A549 (cell line): ENCODE measurements at regions of chr14 and their contacts with region 1.

Region 1: DNA sequence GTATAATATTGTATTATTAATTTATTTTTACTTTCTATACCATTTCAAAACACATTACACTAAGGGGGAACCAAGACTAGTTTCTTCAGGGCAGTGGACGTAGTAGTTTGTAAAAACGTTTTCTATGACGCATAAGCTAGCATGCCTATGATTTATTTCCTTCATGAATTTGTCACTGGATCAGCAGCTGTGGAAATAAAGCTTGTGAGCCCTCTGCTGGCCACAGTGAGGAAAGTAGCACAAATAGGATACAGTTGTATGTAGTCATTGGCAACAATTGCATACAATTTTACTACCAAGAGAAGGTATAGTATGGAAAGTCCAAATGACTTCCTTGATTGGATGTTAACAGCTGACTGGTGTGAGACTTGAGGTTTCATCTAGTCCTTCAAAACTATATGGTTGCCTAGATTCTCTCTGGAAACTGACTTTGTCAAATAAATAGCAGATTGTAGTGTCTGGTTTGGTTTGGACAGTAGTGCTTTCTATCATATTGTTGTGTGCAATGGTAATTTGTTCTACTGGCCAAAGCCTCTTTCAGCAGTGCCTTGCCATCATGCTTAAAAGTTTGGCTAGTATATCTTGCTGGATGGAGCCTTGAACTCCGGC is 24.3 kb upstream of the PLEKHD1 start:
- DNase-seq: peak; percentile 79 to 85
- ATAC-seq: peak; percentile 98
- H3K4me3 ChIP-seq: no peak overlapping the region
- H3K27ac ChIP-seq: no peak overlapping the region
- H3K4me1 ChIP-seq: no peaks in the 10 kb centered on the region
- CTCF ChIP-seq: peak; percentile 84
- EP300 ChIP-seq: no peak
- POLR2A ChIP-seq: no peak
- RAD21 ChIP-seq: peak; percentile 75 to 80

Region 2: GRCh38 chr14:69247676-69248440 is 212.3 kb before region 1 on chr14:
- CTCF ChIA-PET with region 1: interaction called, 95 read pairs
- POLR2A ChIA-PET with region 1: no interaction called
- DNase-seq: no peak
- ATAC-seq: peak in 1 of 2 experiments; percentile 41; a peak in 1 of 6 replicates
- H3K4me3 ChIP-seq: no peak overlapping the region
- H3K27ac ChIP-seq: no peak overlapping the region
- H3K4me1 ChIP-seq: no peaks in the 10 kb centered on the region; the same call in 2 of the 3 replicates
- CTCF ChIP-seq: no peak; the same call in 2 of the 3 replicates
- EP300 ChIP-seq: no peak
- POLR2A ChIP-seq: no peak
- RAD21 ChIP-seq: no peak

Region 3: GRCh38 chr14:69475194-69475818 is 15.1 kb after region 1 on chr14:
- CTCF ChIA-PET with region 1: interaction called, 12 read pairs
- POLR2A ChIA-PET with region 1: no interaction called
- DNase-seq: peak; percentile 35 to 56
- ATAC-seq: peak; percentile 80 to 87; a peak in 4 of 6 replicates
- H3K4me3 ChIP-seq: no peak overlapping the region
- H3K27ac ChIP-seq: no peak overlapping the region
- H3K4me1 ChIP-seq: no peaks in the 10 kb centered on the region
- CTCF ChIP-seq: peak; percentile 47
- EP300 ChIP-seq: no peak
- POLR2A ChIP-seq: no peak
- RAD21 ChIP-seq: 0 out of 5 replicates have a peak, but pooled peaks of 1 of the 2 experiments have one; percentile 12